ENCODE measurements at regions of chr2 and their contacts with region 1.

Region 1: DNA sequence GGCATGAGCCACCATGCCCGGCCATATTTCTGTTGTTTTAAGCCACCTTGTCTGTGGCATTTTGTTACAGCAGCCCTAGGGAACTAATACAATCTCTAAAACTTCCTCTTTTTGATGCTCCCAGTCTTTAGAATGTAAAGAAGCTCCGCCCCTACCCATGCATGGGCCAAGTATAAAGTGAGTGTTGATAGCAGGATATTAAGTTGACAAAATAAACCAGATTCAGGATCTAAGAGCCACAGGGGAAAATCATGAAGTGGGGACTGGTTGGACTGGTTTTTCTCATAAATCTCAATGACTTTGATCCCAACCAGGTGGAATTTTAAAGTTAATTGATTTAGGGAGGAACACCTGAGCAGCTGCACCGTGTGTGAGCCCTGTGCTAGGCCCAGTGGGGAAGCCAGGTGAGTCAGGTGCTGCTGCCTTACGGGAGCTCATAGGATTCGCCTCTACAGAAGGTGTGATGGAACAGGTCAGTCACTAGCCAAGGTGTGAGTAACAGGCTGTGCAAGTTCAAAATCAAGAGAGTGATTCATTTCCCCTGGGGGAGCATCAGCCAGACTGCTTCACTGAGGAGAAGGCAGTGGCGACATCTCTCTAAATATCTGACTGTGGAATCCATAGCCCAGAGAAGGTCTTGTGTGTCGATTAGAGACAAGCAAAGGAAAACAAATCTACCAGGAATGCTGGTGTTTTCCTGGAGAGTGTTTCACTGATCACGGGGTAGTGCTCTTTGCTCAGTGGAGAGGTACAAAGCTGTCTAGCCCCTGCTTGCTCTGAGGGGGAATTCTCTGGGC is 63.0 kb upstream of the MSH2 start:
- DNase-seq: peak; percentile 83
- H3K4me3 ChIP-seq: no peak overlapping the region
- H3K27ac ChIP-seq: no peak overlapping the region
- H3K4me1 ChIP-seq: peaks cover 6% of the 10 kb centered on the region
- H3K27me3 ChIP-seq: no peaks in the 10 kb centered on the region

Region 2: DNA sequence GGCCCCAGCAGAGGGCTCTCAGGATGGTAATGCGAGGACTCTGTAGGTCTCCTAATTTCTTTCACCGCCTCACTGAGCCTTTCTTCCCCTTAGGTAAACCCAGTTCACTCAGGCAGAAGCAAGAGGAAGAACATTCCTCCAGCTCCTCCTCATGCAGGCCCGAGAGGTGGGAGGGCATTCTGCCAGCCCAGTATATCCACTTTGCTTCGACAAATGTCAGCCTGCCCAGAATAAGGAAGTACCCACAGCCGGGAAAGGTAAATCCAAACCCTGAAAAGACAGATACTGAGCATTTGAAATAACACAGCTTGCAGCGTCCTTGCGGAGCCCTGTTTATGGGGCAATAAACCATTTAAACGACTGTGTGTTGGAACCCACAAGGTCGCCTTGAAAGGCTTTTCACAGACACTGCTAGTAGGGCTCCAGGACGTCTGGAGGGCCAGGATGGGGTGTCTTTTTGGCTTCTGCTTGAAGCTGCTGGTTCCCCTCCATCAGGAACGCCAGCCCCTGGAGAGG is 121.8 kb before region 1 on chr2:
- in situ Hi-C with region 1: no loop called
- DNase-seq: no peak
- H3K4me3 ChIP-seq: no peak overlapping the region
- H3K27ac ChIP-seq: no peak overlapping the region
- H3K4me1 ChIP-seq: peaks cover 12% of the 10 kb centered on the region; the same call in 1 of the 2 replicates
- H3K27me3 ChIP-seq: no peaks in the 10 kb centered on the region

Region 3: DNA sequence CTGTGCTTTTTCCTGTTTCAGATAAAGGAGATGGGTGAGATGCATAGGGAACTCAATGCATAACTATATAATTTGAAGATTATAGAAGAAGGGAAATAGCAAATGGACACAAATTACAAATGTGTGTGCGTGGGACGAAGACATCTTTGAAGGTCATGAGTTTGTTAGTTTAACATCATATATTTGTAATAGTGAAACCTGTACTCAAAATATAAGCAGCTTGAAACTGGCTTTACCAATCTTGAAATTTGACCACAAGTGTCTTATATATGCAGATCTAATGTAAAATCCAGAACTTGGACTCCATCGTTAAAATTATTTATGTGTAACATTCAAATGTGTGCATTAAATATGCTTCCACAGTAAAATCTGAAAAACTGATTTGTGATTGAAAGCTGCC is 46.6 kb after region 1 on chr2:
- in situ Hi-C with region 1: loop called (anchors 5 kb)
- DNase-seq: no peak
- H3K4me3 ChIP-seq: no peak overlapping the region
- H3K27ac ChIP-seq: no peak overlapping the region
- H3K4me1 ChIP-seq: no peaks in the 10 kb centered on the region
- H3K27me3 ChIP-seq: 0 out of 2 replicates have a peak, but pooled peaks cover 5% of the 10 kb centered on the region

Measured in GM23248 (cell line).